ENCODE measurements at regions of chr2 and their contacts with region 1.

Region 1: GRCh38 chr2:43412121-43412753 is 183.6 kb downstream of the THADA start:
- DNase-seq: no peak
- H3K4me3 ChIP-seq: no peak overlapping the region
- H3K27ac ChIP-seq: peak overlapping the region; percentile 39 to 49
- H3K4me1 ChIP-seq: peaks cover 13 to 56% of the 10 kb centered on the region in 2 donors
- H3K27me3 ChIP-seq: no peaks in the 10 kb centered on the region
- CTCF ChIP-seq: no peak

Region 2: DNA sequence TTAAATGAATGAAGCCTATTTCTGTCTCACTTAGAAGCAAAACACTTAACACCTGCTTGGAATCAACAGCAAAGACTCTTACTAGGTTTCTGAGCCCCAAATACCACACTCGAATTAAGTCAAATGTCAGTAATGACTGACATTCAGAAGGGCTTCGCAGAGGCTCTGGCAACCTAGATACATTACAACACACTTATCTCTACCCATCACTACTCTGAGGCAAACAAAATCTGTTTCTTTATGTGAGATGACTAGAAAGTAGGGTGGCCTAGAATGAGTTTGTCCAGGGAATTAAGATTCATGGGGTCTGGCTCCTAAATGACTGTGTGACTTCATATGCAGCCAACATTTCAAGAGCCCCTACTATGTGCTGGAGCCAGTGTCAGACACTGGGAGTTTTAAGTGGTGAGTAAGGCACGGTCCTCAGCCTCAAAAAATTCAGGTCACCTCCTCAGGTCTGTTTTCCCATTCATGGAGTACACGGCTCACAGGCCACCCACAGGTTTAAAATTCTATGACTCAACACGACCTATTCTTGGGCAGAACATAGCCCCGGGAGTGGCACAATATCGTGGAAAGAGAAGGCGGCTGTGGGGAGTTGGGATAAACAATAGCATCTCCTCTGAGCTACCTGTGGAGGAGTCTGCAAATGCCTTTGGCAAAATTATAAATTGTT is 35.6 kb before region 1 on chr2:
- intact Hi-C with region 1: no loop called
- DNase-seq: no peak
- H3K4me3 ChIP-seq: no peak overlapping the region
- H3K27ac ChIP-seq: no peak overlapping the region
- H3K4me1 ChIP-seq: peaks cover 0 to under 1% of the 10 kb centered on the region in 2 donors
- H3K27me3 ChIP-seq: no peaks in the 10 kb centered on the region
- CTCF ChIP-seq: no peak

Region 3: GRCh38 chr2:43467891-43468290 is 55.7 kb after region 1 on chr2:
- intact Hi-C with region 1: loop called (anchors 5 kb)
- DNase-seq: no peak
- H3K4me3 ChIP-seq: no peak overlapping the region
- H3K27ac ChIP-seq: peak overlapping the region; percentile 59 to 76
- H3K4me1 ChIP-seq: peaks cover 3 to 42% of the 10 kb centered on the region in 2 donors
- H3K27me3 ChIP-seq: no peaks in the 10 kb centered on the region
- CTCF ChIP-seq: no peak